PC-9 (cell line): ENCODE measurements at regions of chr7 and their contacts with region 1.

Region 1: DNA sequence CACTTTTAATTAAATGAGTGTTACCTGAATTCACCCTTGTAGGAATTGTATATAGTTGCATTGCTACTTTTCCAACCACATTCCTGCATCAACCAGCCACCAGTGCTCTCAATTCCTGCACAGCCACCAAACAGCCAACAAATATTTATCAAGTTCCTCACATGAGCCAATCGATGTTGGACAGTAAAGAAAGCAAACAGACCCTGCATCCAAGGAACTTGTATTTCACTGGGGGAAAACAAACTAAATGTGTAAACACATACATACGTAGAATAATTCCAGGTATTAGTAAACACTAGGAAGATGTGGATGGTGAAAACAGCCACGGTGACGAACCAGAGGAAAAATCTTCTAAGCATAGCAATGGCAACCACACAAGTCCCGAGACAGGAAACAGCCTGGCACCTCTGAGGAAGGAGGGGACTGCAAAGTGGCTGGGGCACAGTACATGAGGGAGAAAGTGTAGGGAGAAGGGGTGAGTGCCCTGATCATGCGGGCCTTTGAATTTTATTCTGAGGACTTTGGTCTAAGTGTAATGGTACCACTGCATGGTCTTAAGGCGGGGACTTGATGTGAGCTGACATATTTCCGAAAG is 111.2 kb downstream of the XRCC2 start:
- DNase-seq: no peak
- H3K4me3 ChIP-seq: no peak overlapping the region
- H3K27ac ChIP-seq: no peak overlapping the region
- H3K4me1 ChIP-seq: no peaks in the 10 kb centered on the region
- H3K27me3 ChIP-seq: no peaks in the 10 kb centered on the region
- CTCF ChIP-seq: no peak

Region 2: DNA sequence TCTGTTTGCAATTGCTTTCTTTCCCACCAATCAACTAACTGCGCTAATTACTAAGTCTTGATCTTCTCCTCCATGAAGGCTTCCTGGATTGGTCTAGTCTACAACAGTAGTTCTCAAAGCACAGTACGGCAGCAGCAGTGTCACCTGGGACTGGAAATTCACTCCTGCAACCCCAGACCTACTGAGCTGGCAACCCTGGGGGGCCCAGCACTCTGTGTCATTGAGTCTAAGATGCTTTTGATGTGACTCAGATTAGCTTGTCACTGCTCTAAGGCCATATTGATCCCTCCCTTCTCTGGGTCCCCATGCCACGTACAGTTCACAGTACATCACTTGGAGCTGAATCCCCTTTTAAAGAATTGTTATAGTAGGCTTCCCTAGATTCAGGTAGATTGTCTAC is 63.3 kb before region 1 on chr7:
- CTCF ChIA-PET with region 1: no interaction called
- POLR2A ChIA-PET with region 1: no interaction called
- intact Hi-C with region 1: no loop called
- DNase-seq: no peak
- H3K4me3 ChIP-seq: no peak overlapping the region
- H3K27ac ChIP-seq: no peak overlapping the region
- H3K4me1 ChIP-seq: peaks cover 27% of the 10 kb centered on the region
- H3K27me3 ChIP-seq: no peaks in the 10 kb centered on the region
- CTCF ChIP-seq: no peak

Region 3: GRCh38 chr7:152527610-152528032 is 37.1 kb before region 1 on chr7:
- CTCF ChIA-PET with region 1: interaction called, 10 read pairs
- POLR2A ChIA-PET with region 1: no interaction called
- intact Hi-C with region 1: no loop called
- DNase-seq: peak in 1 of 2 experiments; percentile 34
- H3K4me3 ChIP-seq: no peak overlapping the region
- H3K27ac ChIP-seq: no peak overlapping the region
- H3K4me1 ChIP-seq: no peaks in the 10 kb centered on the region; the same call in 1 of the 2 replicates
- H3K27me3 ChIP-seq: no peaks in the 10 kb centered on the region
- CTCF ChIP-seq: no peak

Region 4: GRCh38 chr7:153170287-153170686 is 605.5 kb after region 1 on chr7:
- CTCF ChIA-PET with region 1: no interaction called
- POLR2A ChIA-PET with region 1: no interaction called
- intact Hi-C with region 1: no loop called
- DNase-seq: no peak
- H3K4me3 ChIP-seq: no peak overlapping the region
- H3K27ac ChIP-seq: no peak overlapping the region
- H3K4me1 ChIP-seq: no peaks in the 10 kb centered on the region
- H3K27me3 ChIP-seq: peaks cover 13% of the 10 kb centered on the region; the same call in 1 of the 2 replicates
- CTCF ChIP-seq: no peak